Activated CD8-positive, alpha-beta T cell treated with anti-CD3 and anti-CD28 coated beads, Interleukin-2, amount 10 ng/mL, durations not matched to agents 7 days and 5 days (primary cell): ENCODE measurements at regions of chr14 and their contacts with region 1.

Region 1: DNA sequence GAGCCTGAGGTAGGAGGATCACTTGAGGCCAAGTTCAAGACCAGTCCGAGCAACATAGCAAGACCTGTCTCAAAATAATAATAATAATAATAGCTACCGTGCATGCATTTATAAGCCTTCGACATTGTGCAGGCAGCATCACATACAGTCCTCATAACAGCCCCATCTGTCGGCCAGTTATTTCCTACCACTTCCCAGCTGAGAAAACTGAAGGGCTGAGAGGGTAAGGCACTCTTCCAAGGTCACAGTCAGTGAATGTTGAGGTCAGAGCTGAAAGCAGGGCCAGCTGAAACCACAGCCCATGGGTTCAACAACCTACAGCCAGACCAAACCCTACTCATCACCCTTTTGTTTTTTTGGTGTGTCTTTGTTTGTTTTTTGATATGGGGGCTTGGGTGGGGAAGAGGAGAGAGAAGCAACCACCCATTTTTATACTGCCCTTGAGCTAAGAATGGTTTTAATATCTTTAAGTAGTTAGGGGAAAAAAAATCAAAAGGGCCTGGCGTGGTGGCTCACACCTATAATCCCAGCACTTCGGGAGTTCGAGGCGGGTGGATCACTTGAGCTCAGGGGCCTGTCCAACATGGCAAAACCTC is 16.8 kb upstream of the ITPK1 start:
- DNase-seq: peak; percentile 55
- ATAC-seq: peak; percentile 77
- H3K4me3 Mint-ChIP-seq: no peak overlapping the region
- H3K27ac Mint-ChIP-seq: no peak overlapping the region
- H3K4me1 Mint-ChIP-seq: no peaks in the 10 kb centered on the region
- H3K27me3 Mint-ChIP-seq: peaks cover 6% of the 10 kb centered on the region

Region 2: DNA sequence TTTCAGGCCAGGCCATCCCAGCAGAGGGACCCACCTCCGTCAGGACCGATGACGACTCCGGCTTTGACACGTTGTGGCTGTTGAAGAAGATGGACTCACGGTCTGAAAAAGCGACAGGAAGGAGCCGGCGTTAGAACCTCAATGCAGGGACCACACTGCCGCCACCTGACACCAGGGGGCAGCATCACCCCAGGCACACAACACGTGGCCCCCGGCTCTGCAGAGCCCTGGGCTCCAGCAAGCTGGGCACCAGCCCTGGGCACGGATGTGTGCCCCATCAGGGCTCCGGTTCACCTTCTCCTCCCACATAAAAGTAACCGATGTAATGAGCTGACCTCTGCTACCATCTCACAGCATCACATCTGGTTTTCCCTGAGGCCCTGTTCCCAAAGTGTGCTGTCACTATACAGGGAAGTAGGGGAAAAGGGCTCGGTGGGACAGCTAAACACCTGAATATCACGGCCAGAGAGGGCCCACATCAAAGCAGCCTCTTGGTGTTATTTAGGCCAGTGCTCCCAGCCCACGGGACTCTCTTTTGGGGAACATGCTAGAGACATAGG is 180.6 kb before region 1 on chr14:
- CTCF ChIA-PET with region 1: interaction called, 27 read pairs
- POLR2A ChIA-PET with region 1: no interaction called
- DNase-seq: peak; percentile 88
- ATAC-seq: peak; percentile 95
- H3K4me3 Mint-ChIP-seq: no peak overlapping the region
- H3K27ac Mint-ChIP-seq: no peak overlapping the region
- H3K4me1 Mint-ChIP-seq: peaks cover 7% of the 10 kb centered on the region
- H3K27me3 Mint-ChIP-seq: no peaks in the 10 kb centered on the region

Region 3: GRCh38 chr14:93120517-93120916 is 12.1 kb before region 1 on chr14:
- CTCF ChIA-PET with region 1: interaction called, 101 read pairs
- POLR2A ChIA-PET with region 1: interaction called, 4 read pairs
- DNase-seq: no peak
- ATAC-seq: no peak
- H3K4me3 Mint-ChIP-seq: no peak overlapping the region
- H3K27ac Mint-ChIP-seq: no peak overlapping the region
- H3K4me1 Mint-ChIP-seq: peaks cover 10% of the 10 kb centered on the region
- H3K27me3 Mint-ChIP-seq: no peaks in the 10 kb centered on the region

Region 4: DNA sequence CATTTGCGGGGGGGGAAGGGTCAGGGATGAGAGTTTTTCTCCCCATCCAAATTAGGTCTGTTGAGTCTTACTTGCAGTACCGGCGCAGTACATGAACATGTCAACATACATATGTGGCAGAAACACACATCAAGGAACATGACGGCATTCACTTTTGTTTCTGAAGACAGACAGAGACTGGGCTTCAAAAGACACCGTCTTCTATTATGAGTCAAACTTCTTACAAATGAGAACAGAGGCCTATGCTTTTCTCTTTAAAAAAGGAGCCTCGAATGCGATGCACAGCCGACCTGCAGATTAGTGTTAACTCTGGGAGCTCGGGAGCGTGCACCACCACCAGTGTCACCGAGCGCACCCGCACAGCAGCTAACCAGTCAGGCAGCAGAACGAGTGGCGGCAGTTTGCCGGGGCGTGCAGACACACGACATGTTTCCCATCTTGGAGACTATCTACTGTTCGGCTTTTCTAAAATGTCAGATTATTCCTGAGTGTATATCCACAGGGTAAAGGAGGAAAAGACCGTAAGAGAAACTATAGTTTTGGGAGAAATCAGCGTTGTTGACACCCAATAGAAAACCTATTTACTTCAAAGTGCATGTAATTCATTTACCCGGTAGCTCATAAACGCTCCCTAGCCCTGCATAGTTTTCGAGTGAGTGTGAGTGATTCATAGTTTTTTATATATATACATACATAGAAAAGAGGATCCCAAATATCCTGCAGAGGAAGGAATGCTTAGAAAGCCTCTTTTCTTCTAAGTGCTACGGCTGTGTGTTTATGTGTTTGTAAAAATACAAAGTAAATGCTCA is 107.5 kb after region 1 on chr14:
- CTCF ChIA-PET with region 1: no interaction called
- POLR2A ChIA-PET with region 1: no interaction called
- DNase-seq: no peak
- ATAC-seq: no peak
- H3K4me3 Mint-ChIP-seq: no peak overlapping the region
- H3K27ac Mint-ChIP-seq: no peak overlapping the region
- H3K4me1 Mint-ChIP-seq: no peaks in the 10 kb centered on the region
- H3K27me3 Mint-ChIP-seq: no peaks in the 10 kb centered on the region